Activated CD4-positive, alpha-beta T cell treated with anti-CD3 and anti-CD28 coated beads for 36 hours (primary cell): ENCODE measurements at regions of chr11 and their contacts with region 1.

Region 1: GRCh38 chr11:93895106-93895862 is 44.9 kb upstream of the VSTM5 start:
- DNase-seq: peak; percentile 19
- ATAC-seq: peak; percentile 64
- H3K4me3 Mint-ChIP-seq: no peak overlapping the region
- H3K27ac Mint-ChIP-seq: no peak overlapping the region
- H3K4me1 Mint-ChIP-seq: no peaks in the 10 kb centered on the region
- H3K27me3 Mint-ChIP-seq: peaks cover 35% of the 10 kb centered on the region

Region 2: DNA sequence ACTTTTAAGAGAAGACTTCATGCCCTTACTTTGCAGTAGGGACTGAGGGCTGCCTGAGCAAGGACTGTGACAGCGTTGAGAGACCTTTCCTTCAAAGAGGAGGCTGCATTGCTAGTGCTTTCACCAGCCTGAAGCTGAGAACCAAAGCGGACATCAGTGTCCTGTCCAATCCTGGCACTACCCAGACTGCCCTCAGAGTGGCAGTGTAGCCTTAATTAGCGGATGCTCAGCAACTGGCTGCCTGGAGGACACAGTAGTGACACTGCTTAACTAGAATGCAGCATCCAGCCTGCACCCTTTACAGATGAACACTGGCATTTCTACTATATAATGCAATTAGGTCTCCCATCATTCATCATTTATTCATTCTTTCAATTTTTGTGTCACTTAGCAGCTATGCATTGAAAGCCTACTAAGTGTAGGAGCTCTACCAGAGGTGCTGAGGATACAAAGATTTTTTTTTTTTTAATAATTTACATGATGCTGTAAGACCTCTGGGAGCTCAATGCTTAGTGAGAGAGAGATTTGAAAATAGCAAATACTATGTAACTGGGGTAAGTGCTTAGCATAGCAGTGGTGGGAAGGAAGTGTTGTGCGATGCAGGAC is 660.6 kb before region 1 on chr11:
- CTCF ChIA-PET with region 1: no interaction called
- POLR2A ChIA-PET with region 1: no interaction called
- intact Hi-C with region 1: loop called in 1 of 2 experiments (anchors 10 kb)
- DNase-seq: peak; percentile 82
- ATAC-seq: peak; percentile 99
- H3K4me3 Mint-ChIP-seq: no peak overlapping the region
- H3K27ac Mint-ChIP-seq: no peak overlapping the region
- H3K4me1 Mint-ChIP-seq: no peaks in the 10 kb centered on the region
- H3K27me3 Mint-ChIP-seq: peaks cover 9% of the 10 kb centered on the region

Region 3: GRCh38 chr11:93905384-93905783 is 10.1 kb after region 1 on chr11:
- CTCF ChIA-PET with region 1: interaction called, 10 read pairs
- POLR2A ChIA-PET with region 1: no interaction called
- intact Hi-C with region 1: no loop called
- DNase-seq: no peak
- ATAC-seq: no peak
- H3K4me3 Mint-ChIP-seq: no peak overlapping the region
- H3K27ac Mint-ChIP-seq: no peak overlapping the region
- H3K4me1 Mint-ChIP-seq: no peaks in the 10 kb centered on the region
- H3K27me3 Mint-ChIP-seq: peaks cover 6% of the 10 kb centered on the region

Region 4: DNA sequence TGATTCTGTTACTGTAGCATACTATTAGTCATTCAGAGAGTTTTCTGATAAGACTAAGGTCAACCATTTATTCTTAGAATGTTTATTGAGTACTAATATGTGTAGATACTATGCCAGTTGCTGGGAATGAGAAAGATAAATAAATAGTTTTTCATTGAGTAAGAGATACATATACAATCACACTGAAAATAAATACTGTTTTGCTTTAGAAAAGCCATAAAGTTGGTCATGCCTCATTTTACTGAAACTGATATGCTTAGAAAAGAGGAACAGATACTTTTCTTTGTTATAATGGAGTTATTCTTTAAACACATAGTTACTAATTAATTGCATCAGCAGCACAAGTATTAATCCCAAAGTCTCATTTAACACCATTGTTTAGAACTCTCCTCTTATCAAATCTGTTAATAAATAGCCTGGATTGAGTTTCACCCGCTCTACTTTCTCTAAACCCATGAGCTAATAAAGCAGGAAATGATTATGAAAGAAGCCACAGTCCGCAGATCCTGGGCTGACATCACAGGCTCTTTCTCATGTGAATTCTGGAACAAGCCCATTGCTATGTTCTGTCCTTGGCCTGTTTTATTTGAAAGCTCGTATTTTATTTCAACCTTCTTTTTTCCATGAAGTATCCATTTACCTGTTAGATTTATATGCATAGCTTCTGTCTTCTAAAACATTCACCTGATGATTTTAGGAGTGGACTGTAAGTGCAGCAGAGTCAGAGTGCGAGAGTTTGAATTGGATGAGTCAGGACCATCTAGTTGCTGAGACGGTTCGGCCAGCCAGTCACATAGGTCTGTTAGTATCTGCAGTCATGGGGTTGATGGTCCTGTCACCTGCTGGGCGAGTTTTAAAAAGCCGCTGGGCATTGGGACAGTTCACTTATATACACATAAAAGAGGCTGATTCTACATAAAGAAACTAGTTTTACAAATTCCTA is 707.4 kb after region 1 on chr11:
- CTCF ChIA-PET with region 1: interaction called, 4 read pairs
- POLR2A ChIA-PET with region 1: no interaction called
- intact Hi-C with region 1: loop called in 1 of 2 experiments (anchors 10 kb)
- DNase-seq: peak; percentile 76
- ATAC-seq: peak; percentile 92
- H3K4me3 Mint-ChIP-seq: no peak overlapping the region
- H3K27ac Mint-ChIP-seq: no peak overlapping the region
- H3K4me1 Mint-ChIP-seq: peaks cover 2% of the 10 kb centered on the region
- H3K27me3 Mint-ChIP-seq: no peaks in the 10 kb centered on the region